ENCODE measurements at regions of chr6 and their contacts with region 1.

Region 1: DNA sequence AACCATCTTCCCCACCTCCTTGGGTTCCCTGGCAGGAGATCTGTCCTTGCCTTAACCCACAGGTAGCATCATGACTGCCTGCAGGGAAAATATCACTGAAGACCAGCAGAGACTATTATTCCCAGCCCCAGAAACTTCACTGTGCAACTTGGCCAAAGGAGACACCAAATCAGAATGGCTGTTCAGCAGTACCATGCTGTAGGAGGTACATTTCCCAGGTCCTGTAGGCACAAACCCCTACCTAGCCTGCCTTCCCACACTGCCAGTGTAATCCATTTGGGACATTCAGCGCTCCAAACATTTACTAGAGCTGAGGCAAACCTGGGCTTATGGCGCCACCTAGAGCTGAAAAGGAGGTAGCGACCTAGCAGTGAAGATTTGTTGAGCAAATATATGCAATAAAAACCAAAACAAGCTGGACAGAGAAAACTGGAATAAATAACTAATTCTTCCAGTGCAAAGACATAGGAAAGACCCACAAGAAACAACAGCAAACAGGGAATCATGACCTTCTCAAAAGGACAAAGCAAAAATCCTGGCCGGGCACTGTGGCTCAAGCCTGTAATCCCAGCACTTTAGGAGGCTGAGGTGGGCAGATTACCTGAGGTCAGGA is 60.3 kb downstream of the VTA1 start:
- DNase-seq: no peak
- ATAC-seq: peak; percentile 84
- H3K4me3 ChIP-seq: no peak overlapping the region
- H3K27ac ChIP-seq: no peak overlapping the region
- H3K4me1 ChIP-seq: no peaks in the 10 kb centered on the region
- H3K27me3 ChIP-seq: no peaks in the 10 kb centered on the region
- CTCF ChIP-seq: peak; percentile 69 to 71 (median 70)
- EP300 ChIP-seq: no peak
- POLR2A ChIP-seq: no peak
- RAD21 ChIP-seq: peak; percentile 57

Region 2: DNA sequence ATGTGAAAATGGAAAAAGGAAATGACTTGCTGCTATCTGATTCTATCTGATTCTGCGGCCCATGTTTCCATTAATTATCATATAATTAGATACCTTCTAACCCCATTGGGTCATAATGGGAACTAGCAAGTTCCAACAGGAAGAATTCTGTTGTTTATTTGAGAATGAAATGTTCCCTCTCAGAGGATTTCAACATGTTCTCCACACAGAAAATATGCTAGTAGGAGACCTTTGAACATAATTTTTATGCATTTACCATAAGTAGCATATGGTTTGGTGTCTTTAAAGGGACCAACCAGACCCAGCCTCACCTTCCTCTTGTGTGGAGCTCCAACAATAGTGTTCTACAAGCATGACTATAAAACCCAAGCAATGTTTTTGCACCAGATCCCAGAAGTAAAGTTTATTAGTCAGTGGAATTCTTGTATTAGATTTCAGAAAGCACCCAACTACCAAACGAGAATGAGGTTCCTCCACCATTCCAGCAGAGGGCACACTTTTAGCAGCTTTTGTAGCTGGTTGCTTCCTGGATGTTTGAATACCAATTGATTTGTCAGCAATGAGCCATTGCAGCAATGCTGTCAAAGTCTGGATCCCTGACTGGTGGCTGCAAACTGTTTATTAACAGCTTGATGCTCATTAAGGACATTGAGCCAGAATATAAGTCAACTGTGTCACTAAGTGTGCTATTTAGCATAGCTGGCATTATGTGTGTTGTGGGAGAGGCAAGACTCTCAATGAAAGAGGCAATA is 218.2 kb before region 1 on chr6:
- CTCF ChIA-PET with region 1: interaction called, 15 read pairs
- POLR2A ChIA-PET with region 1: no interaction called
- RAD21 ChIA-PET with region 1: no interaction called
- SMC1A ChIA-PET with region 1: interaction called, 5 read pairs
- in situ Hi-C with region 1: no loop called
- intact Hi-C with region 1: loop called (anchors 1 kb)
- DNase-seq: no peak
- ATAC-seq: peak; percentile 78
- H3K4me3 ChIP-seq: no peak overlapping the region
- H3K27ac ChIP-seq: no peak overlapping the region
- H3K4me1 ChIP-seq: no peaks in the 10 kb centered on the region
- H3K27me3 ChIP-seq: no peaks in the 10 kb centered on the region
- CTCF ChIP-seq: peak; percentile 61 to 69 (median 67)
- EP300 ChIP-seq: no peak
- POLR2A ChIP-seq: no peak
- RAD21 ChIP-seq: peak; percentile 63

Region 3: GRCh38 chr6:142146828-142147662 is 60.3 kb before region 1 on chr6 and contains the starts of genes NMBR and VTA1:
- CTCF ChIA-PET with region 1: interaction called, 50 read pairs
- POLR2A ChIA-PET with region 1: no interaction called
- RAD21 ChIA-PET with region 1: interaction called, 14 read pairs
- SMC1A ChIA-PET with region 1: interaction called, 22 read pairs
- in situ Hi-C with region 1: no loop called
- intact Hi-C with region 1: loop called (anchors 1 kb)
- DNase-seq: peak; percentile 97
- ATAC-seq: peak; percentile 98
- H3K4me3 ChIP-seq: peak within 1 kb of the TSS; percentile 97
- H3K27ac ChIP-seq: peak within 1 kb of the TSS; percentile 59
- H3K4me1 ChIP-seq: no peaks in the 10 kb centered on the region
- H3K27me3 ChIP-seq: no peaks in the 10 kb centered on the region
- CTCF ChIP-seq: peak; percentile 82 to 96 (median 92); a peak in 5 of 6 replicates
- EP300 ChIP-seq: no peak
- POLR2A ChIP-seq: peak; percentile 94
- RAD21 ChIP-seq: peak; percentile 88
- polyA plus RNA-seq, gene NMBR: not detected
- polyA plus RNA-seq, gene VTA1: 84.7 to 126 TPM

Region 4: DNA sequence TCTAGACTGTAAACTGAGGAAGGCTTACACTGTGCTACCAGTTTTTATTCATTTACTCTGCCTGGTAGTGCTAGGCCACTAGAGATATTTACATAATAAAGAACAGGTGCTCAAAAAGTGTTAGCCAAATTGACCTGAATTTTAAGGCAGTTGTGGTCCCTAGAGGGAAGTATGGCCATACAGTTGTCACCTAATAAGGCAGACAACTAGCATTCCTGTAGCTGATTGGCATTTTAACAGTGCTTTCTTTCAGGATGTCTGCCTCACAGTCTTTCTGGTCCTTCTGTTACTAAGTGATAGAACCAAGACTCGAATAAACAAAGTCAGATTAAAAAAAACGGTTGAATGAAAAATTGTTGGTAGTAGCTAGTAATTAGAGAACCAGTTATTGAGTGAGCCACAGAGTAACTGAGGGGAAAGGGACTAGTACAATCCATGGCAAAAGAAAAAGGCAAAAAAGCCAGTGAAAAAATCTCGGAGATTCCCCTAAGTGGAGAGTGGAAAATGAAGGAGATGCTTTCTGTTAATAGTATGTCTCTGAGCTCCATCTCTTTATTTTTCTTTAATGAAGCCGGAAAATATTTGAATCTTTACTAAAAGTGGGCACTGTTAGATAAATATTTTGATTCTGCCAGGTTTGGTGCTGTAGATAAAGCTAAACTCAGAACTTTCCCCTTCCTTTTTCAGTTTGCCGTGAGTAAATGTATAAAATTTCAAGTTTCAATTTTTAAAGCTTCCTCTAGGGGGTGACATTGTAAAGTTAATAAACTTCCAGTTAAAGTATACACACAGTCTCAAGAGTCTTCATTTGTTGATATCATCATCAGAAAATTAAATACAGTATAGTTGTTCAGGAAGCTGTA is 51.2 kb before region 1 on chr6:
- CTCF ChIA-PET with region 1: interaction called, 32 read pairs
- POLR2A ChIA-PET with region 1: no interaction called
- RAD21 ChIA-PET with region 1: interaction called, 12 read pairs
- SMC1A ChIA-PET with region 1: interaction called, 22 read pairs
- in situ Hi-C with region 1: no loop called
- intact Hi-C with region 1: no loop called
- DNase-seq: no peak
- ATAC-seq: peak; percentile 71
- H3K4me3 ChIP-seq: no peak overlapping the region
- H3K27ac ChIP-seq: no peak overlapping the region
- H3K4me1 ChIP-seq: no peaks in the 10 kb centered on the region
- H3K27me3 ChIP-seq: no peaks in the 10 kb centered on the region
- CTCF ChIP-seq: peak in 2 of 3 experiments; percentile 6 to 14; a peak in 2 of 6 replicates
- EP300 ChIP-seq: no peak
- POLR2A ChIP-seq: no peak
- RAD21 ChIP-seq: no peak

Region 5: DNA sequence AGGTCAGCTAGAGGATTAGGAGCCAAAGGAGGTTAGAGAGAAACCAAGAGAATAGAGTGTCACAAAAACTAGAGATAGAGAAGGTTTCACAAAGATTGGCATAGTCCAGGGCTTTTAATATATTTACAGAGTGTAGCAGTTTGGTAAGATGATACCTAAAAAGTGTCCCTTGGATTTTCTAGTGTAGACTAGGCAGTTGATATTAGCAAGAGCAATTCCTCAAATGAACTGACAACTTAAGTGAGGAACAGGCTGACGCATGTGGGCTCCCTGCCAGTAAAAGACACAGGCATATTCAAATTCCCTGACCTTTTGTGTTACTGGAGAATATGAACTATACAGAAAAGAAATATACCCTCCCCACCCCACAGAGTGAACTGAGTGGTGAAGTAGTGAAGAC is 20.2 kb before region 1 on chr6:
- CTCF ChIA-PET with region 1: interaction called, 8 read pairs
- POLR2A ChIA-PET with region 1: no interaction called
- RAD21 ChIA-PET with region 1: interaction called, 3 read pairs
- SMC1A ChIA-PET with region 1: interaction called, 12 read pairs
- in situ Hi-C with region 1: no loop called
- intact Hi-C with region 1: no loop called
- DNase-seq: no peak
- ATAC-seq: no peak
- H3K4me3 ChIP-seq: no peak overlapping the region
- H3K27ac ChIP-seq: no peak overlapping the region
- H3K4me1 ChIP-seq: no peaks in the 10 kb centered on the region
- H3K27me3 ChIP-seq: no peaks in the 10 kb centered on the region
- CTCF ChIP-seq: no peak
- EP300 ChIP-seq: no peak
- POLR2A ChIP-seq: no peak
- RAD21 ChIP-seq: no peak

Region 6: GRCh38 chr6:142195862-142196541 is 11.4 kb before region 1 on chr6:
- CTCF ChIA-PET with region 1: interaction called, 35 read pairs
- POLR2A ChIA-PET with region 1: interaction called, 3 read pairs
- RAD21 ChIA-PET with region 1: interaction called, 5 read pairs
- SMC1A ChIA-PET with region 1: interaction called, 13 read pairs
- in situ Hi-C with region 1: no loop called
- intact Hi-C with region 1: no loop called
- DNase-seq: no peak
- ATAC-seq: no peak
- H3K4me3 ChIP-seq: no peak overlapping the region
- H3K27ac ChIP-seq: no peak overlapping the region
- H3K4me1 ChIP-seq: no peaks in the 10 kb centered on the region
- H3K27me3 ChIP-seq: no peaks in the 10 kb centered on the region
- CTCF ChIP-seq: no peak
- EP300 ChIP-seq: no peak
- POLR2A ChIP-seq: no peak
- RAD21 ChIP-seq: no peak

Region 7: GRCh38 chr6:142218446-142218845 is 11.1 kb after region 1 on chr6:
- CTCF ChIA-PET with region 1: interaction called, 38 read pairs
- POLR2A ChIA-PET with region 1: interaction called, 4 read pairs
- RAD21 ChIA-PET with region 1: interaction called, 3 read pairs
- SMC1A ChIA-PET with region 1: interaction called, 10 read pairs
- in situ Hi-C with region 1: no loop called
- intact Hi-C with region 1: no loop called
- DNase-seq: no peak
- ATAC-seq: no peak
- H3K4me3 ChIP-seq: no peak overlapping the region
- H3K27ac ChIP-seq: no peak overlapping the region
- H3K4me1 ChIP-seq: no peaks in the 10 kb centered on the region
- H3K27me3 ChIP-seq: no peaks in the 10 kb centered on the region
- CTCF ChIP-seq: no peak
- EP300 ChIP-seq: no peak
- POLR2A ChIP-seq: no peak
- RAD21 ChIP-seq: no peak